Panc1 (cell line): ENCODE measurements at regions of chr6 and their contacts with region 1.

Region 1: DNA sequence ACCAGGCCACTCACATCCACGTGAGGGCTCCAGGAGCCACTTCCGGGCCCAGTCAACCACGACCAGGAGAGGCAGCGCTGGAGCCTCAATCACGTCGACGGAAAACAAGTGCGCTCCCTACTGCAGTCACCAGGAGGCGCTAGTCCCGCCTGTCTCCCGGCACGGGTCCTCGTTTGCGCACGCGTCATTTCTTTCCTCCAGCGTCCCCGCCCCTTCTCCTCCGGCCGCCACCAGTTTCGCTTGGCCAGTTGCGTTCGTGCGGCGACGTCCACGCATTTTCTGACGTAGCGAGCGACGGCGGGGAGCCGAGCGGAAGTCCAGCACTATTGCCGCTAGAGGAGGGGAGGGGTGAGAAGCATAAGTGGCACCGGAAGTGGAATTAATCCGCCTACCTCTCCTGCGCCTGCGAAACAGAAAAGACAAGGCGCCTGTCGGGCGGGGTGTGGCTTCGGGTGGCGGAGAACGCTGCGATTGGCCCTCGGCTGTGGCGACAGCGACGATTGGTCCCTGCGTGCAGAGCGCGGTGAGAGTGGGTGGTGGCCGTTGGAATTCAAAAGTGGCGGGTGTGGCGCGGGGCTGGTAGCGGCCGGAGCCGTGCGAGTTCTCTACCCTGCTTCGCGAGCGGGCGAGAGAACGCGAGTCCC is at the start of gene KIFC1:
- DNase-seq: peak; percentile 98
- ATAC-seq: peak; percentile 97
- H3K4me3 ChIP-seq: peak within 1 kb of the TSS; percentile 88 to 89
- H3K27ac ChIP-seq: peak within 1 kb of the TSS; percentile 98
- H3K4me1 ChIP-seq: peaks cover 27% of the 10 kb centered on the region
- H3K27me3 ChIP-seq: no peaks in the 10 kb centered on the region
- CTCF ChIP-seq: peak; percentile 99
- total RNA-seq, gene KIFC1: 81.8 TPM

Region 2: DNA sequence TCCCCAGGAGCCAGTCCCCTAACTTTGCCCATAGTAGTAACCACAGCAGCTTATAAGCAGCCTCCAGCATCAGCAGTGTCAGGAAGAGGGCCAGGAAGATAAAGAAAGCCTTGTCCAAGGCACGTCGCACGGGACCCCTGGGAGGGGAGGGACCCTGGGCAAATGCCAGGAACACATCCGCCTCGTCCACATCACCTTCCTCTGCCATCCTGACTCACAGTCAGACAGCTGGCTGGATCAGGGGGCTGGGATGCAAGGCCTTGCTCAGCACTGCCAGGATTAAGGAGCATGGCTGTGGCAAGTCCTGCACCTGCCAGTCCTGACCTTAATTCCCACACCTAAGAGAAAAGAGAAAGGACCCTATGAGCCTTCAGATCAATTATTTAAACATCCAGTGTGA is 62.3 kb before region 1 on chr6:
- CTCF ChIA-PET with region 1: no interaction called
- POLR2A ChIA-PET with region 1: interaction called, 11 read pairs
- in situ Hi-C with region 1: no loop called
- intact Hi-C with region 1: no loop called
- DNase-seq: no peak
- ATAC-seq: peak; percentile 62; the same call in 1 of the 2 replicates
- H3K4me3 ChIP-seq: no peak overlapping the region
- H3K27ac ChIP-seq: no peak overlapping the region
- H3K4me1 ChIP-seq: peaks cover 3% of the 10 kb centered on the region
- H3K27me3 ChIP-seq: no peaks in the 10 kb centered on the region
- CTCF ChIP-seq: no peak